ENCODE measurements at regions of chr7 and their contacts with region 1.

Region 1: GRCh38 chr7:143287935-143288826 is at the start of gene CASP2:
- DNase-seq: peak; percentile 93 to 99
- H3K4me3 ChIP-seq: peak within 1 kb of the TSS; percentile 89 to 93
- H3K27ac ChIP-seq: peak within 1 kb of the TSS; percentile 94
- H3K4me1 ChIP-seq: peaks cover 3 to 11% of the 10 kb centered on the region in 2 donors
- H3K27me3 ChIP-seq: no peaks in the 10 kb centered on the region
- CTCF ChIP-seq: peak; percentile 25 to 59 (median 48)
- total RNA-seq, gene CASP2: 13.7 TPM

Region 2: DNA sequence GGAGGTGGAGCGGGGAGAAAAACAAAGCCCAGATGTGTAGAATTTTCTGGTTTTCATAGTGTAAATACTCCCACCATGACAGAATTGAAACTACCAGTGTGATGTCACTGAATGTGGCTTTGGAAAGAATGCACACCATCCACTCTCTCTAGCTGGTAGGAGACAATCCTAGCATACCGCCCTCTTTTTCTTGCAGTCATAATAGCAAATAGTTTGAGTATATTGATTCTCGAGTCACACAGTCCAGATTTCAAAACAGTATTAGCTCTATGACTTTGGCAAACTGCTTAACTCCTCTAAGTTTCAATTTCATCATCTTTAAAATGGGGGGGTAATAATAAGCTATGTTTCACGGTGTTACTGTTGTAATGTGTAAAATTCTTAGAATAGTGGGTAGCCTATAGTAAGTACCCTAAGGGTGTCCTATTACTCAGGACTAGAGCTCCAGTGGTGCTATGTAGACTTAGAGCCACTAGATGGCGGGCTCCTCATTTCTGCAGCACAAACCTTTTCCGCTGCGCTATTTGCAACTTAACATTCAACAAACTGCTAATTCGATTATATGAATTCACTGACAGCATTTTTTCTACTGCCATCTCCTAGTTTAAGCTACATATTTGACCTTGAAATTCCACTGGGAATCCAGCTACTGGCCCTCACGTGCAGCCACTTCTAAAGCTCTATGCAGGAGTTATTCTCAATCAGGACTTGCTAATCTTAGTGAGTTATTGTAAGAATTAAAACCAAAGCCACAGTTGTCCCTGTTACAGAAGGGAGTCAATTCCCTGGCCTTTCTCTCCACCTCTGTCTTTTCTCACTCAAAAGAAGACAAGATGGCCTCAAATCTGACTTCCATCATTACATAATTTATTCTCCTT is 47.7 kb before region 1 on chr7:
- intact Hi-C with region 1: loop called (anchors 5 kb)
- DNase-seq: peak in 1 of 2 donors; percentile 78
- H3K4me3 ChIP-seq: no peak overlapping the region
- H3K27ac ChIP-seq: no peak overlapping the region
- H3K4me1 ChIP-seq: no peaks in the 10 kb centered on the region
- H3K27me3 ChIP-seq: no peaks in the 10 kb centered on the region
- CTCF ChIP-seq: peak; percentile 60 to 91 (median 83)

Region 3: DNA sequence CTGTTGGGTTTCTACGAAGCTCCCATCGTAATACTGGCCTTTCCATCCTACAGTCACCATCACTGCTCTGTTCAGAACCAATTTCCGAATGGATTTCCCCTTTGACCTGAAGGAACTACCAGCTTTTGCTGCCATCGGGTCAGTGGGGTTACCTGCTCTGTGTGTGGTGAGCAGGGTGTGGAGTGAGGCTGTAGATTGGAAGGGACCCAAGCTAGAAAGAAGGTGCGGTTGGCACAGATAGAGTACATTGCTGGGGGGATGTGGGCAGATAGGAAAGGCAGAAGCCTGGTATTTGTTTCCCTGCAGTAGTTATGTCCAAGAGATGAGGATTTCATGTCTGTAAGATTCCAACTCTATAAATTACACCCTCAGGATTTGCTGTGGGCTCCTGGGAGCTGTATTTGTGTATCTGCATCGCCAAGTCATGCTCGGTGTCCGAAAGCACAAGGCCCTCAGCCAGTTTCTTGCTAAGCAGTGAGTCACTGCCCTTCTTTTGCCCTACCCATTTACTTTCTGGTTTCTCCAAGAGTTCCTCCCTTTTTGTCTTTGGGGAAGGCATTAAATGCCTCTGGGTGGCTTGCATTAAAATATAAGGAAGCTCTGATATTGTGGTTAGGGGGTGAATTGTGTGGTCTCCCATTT is 43.1 kb after region 1 on chr7:
- intact Hi-C with region 1: no loop called
- DNase-seq: no peak
- H3K4me3 ChIP-seq: no peak overlapping the region
- H3K27ac ChIP-seq: no peak overlapping the region
- H3K4me1 ChIP-seq: no peaks in the 10 kb centered on the region
- H3K27me3 ChIP-seq: no peaks in the 10 kb centered on the region
- CTCF ChIP-seq: no peak

Region 4: DNA sequence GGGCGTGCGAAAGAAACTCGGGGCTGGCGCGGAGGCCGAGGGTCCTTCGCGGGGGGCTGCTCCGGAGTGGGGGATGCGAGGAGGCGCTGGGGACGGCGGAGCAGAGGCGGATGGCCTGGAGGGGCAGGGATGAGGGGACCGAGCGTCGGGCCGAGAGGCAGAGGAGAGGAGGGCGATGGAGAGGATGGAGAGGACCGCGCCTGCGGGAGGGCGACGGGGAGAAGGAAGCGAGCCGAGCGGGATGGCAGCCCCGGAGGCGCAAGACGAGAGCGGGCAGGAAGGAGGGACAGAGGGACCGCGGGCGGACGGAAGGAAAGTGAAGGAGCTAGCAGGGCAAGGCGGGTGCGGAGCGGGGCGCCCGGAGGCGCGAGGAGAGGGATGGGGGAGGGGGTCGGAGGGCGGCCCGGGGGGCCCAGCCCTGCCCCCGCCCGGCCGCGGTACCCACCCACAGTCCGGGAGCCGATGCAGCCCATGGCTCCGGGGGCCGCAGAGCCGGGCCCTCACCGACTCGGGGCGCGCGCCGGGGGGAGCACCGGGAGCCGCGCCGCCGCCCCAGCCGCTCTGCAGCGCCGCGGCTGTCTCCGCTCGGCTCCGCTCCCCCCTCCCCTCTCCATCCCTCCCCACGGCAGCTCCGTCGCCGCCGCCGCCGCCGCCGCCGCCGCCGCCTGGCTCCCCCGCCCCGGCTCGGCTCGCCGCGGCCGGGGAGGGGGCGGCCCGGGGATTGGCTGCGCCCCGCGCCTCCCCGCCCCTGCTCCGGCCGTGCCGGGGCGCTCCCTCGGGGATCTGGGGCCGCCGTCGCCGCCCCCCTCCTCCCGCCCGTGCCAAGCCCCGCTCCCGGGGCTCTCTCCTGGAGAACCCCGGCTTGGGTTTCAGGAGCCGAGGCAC is 74.2 kb after region 1 on chr7 and contains the start of gene FAM131B:
- intact Hi-C with region 1: loop called (anchors 2 kb)
- DNase-seq: no peak
- H3K4me3 ChIP-seq: peak within 1 kb of the TSS; percentile 69 to 79
- H3K27ac ChIP-seq: no peak within 1 kb of the TSS
- H3K4me1 ChIP-seq: peaks cover 0 to 8% of the 10 kb centered on the region in 2 donors
- H3K27me3 ChIP-seq: no peaks in the 10 kb centered on the region
- CTCF ChIP-seq: no peak
- total RNA-seq, gene FAM131B: 0.53 TPM

Region 5: DNA sequence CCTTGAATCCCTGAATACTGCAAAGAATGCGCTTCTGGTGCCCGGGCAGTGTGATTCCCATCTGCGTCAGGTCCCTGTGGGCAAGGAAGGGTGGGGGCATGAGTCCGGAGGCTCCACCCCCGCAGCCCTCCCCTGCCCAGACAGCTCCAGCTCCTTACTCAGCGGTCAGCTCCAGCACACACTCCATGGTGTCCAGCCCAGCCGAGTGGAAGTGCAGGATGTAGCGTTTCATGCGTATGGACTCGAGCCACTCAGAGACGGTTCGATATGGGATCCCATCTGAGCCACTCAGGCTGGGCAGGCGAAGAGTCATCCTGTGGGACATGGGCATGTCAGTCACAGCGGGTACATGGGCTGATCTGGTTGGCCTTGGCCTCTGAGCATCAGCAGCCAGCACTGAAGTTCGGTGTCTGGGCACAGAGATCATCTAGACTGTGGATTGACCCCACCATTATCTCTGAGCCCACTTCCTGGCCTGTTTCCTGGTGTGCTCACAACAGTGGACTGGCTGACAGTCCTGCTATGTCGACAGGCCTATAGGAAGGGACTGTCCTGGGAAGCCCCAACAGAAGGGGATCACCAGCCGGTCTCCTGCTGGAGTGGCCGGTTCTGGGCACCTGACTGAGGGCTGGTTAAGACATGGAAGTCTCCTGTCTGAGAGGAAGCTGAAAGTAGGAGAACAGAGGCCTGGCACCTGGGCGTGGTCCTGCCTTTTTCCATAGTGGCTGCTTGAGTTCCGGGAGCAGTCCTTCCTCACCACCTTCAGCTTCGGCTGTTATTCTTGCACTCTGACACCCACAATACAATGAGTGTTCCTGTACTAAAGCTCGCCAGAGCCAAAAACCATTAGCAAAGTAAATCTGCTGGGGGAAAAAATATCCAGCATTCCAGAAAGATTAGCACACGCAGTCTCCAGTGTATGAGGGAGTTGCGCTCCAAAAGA is 103.6 kb after region 1 on chr7:
- intact Hi-C with region 1: loop called (anchors 1 kb)
- DNase-seq: peak; percentile 66 to 96
- H3K4me3 ChIP-seq: peak overlapping the region; percentile 1 to 42
- H3K27ac ChIP-seq: peak overlapping the region; percentile 97 to 99
- H3K4me1 ChIP-seq: peaks cover 35 to 73% of the 10 kb centered on the region in 2 donors
- H3K27me3 ChIP-seq: no peaks in the 10 kb centered on the region
- CTCF ChIP-seq: no peak

Region 6: GRCh38 chr7:143901668-143902331 is 613.6 kb after region 1 on chr7 and contains the start of gene TCAF1:
- intact Hi-C with region 1: loop called (anchors 5 kb)
- DNase-seq: peak; percentile 79 to 97
- H3K4me3 ChIP-seq: peak within 1 kb of the TSS; percentile 70 to 78
- H3K27ac ChIP-seq: peak within 1 kb of the TSS; percentile 79 to 84
- H3K4me1 ChIP-seq: peaks cover 0 to 3% of the 10 kb centered on the region in 2 donors
- H3K27me3 ChIP-seq: no peaks in the 10 kb centered on the region
- CTCF ChIP-seq: peak in 2 of 3 experiments; percentile 40 to 43
- total RNA-seq, gene TCAF1: 30.9 TPM